ENCODE measurements at regions of chr16 and their contacts with region 1.

Region 1: GRCh38 chr16:75801307-75801706 is 75.0 kb upstream of the CPHXL start:
- DNase-seq: no peak
- ATAC-seq: no peak
- H3K4me3 ChIP-seq: no peak overlapping the region
- H3K27ac ChIP-seq: no peak overlapping the region
- H3K4me1 ChIP-seq: no peaks in the 10 kb centered on the region
- H3K27me3 ChIP-seq: peaks cover 16% of the 10 kb centered on the region
- CTCF ChIP-seq: peak in 2 of 3 experiments; percentile 29 to 42; a peak in 3 of 6 replicates
- POLR2A ChIP-seq: no peak
- RAD21 ChIP-seq: peak; percentile 57

Region 2: GRCh38 chr16:76639685-76640289 is 838.5 kb after region 1 on chr16:
- CTCF ChIA-PET with region 1: no interaction called
- POLR2A ChIA-PET with region 1: no interaction called
- RAD21 ChIA-PET with region 1: no interaction called
- intact Hi-C with region 1: loop called (anchors 10 kb)
- DNase-seq: no peak
- ATAC-seq: peak; percentile 63; the same call in 1 of the 2 replicates
- H3K4me3 ChIP-seq: no peak overlapping the region
- H3K27ac ChIP-seq: no peak overlapping the region
- H3K4me1 ChIP-seq: no peaks in the 10 kb centered on the region
- H3K27me3 ChIP-seq: no peaks in the 10 kb centered on the region
- CTCF ChIP-seq: peak in 2 of 3 experiments; percentile 4 to 29; a peak in 1 of 6 replicates
- POLR2A ChIP-seq: no peak
- RAD21 ChIP-seq: no peak